HepG2 (cell line): ENCODE measurements at regions of chr20 and their contacts with region 1.

Region 1: GRCh38 chr20:5100684-5101347 is 18.9 kb downstream of the PCNA start:
- DNase-seq: peak; percentile 63
- ATAC-seq: peak; percentile 81
- H3K4me3 ChIP-seq: no peak overlapping the region
- H3K27ac ChIP-seq: no peak overlapping the region
- H3K4me1 ChIP-seq: no peaks in the 10 kb centered on the region
- H3K27me3 ChIP-seq: no peaks in the 10 kb centered on the region
- CTCF ChIP-seq: peak; percentile 95
- EP300 ChIP-seq: no peak
- POLR2A ChIP-seq: no peak
- RAD21 ChIP-seq: peak; percentile 94

Region 2: DNA sequence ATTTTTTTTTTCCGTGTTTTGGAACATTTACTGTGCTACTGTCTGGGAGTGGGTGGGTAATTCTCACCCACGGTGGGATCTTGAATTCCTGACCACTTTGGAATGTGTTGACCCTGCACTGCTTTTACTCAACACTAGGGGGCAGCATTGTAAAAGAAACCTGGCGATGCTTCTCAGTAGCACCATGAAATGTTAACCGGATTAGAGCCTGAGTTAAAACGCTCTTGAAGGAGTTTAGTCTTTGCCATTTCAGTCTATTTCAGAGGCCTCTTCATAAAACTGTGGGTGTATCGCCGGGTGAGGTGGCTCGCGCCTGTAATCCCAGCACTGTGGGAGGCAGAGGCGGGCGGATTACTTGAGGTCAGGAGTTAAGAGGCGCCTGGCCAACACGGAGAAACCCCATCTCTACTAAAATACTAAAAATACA is 493.5 kb before region 1 on chr20:
- CTCF ChIA-PET with region 1: no interaction called
- POLR2A ChIA-PET with region 1: no interaction called
- in situ Hi-C with region 1: loop called (anchors 10 kb)
- intact Hi-C with region 1: loop called (anchors 1 kb)
- DNase-seq: peak; percentile 78
- ATAC-seq: peak; percentile 89
- H3K4me3 ChIP-seq: no peak overlapping the region
- H3K27ac ChIP-seq: no peak overlapping the region
- H3K4me1 ChIP-seq: no peaks in the 10 kb centered on the region
- H3K27me3 ChIP-seq: peaks cover 4 to 38% of the 10 kb centered on the region in 2 experiments
- CTCF ChIP-seq: peak; percentile 95
- EP300 ChIP-seq: no peak
- POLR2A ChIP-seq: no peak
- RAD21 ChIP-seq: peak; percentile 96

Region 3: GRCh38 chr20:4666001-4666479 is 434.8 kb before region 1 on chr20:
- CTCF ChIA-PET with region 1: no interaction called
- POLR2A ChIA-PET with region 1: no interaction called
- in situ Hi-C with region 1: no loop called
- intact Hi-C with region 1: no loop called
- DNase-seq: no peak
- ATAC-seq: no peak
- H3K4me3 ChIP-seq: no peak overlapping the region
- H3K27ac ChIP-seq: no peak overlapping the region
- H3K4me1 ChIP-seq: peaks cover 12% of the 10 kb centered on the region
- H3K27me3 ChIP-seq: no peaks in the 10 kb centered on the region; a peak in 1 of 5 replicates
- CTCF ChIP-seq: no peak
- EP300 ChIP-seq: no peak
- POLR2A ChIP-seq: no peak
- RAD21 ChIP-seq: no peak

Region 4: GRCh38 chr20:4973330-4974097 is 127.3 kb before region 1 on chr20:
- CTCF ChIA-PET with region 1: no interaction called
- POLR2A ChIA-PET with region 1: no interaction called
- in situ Hi-C with region 1: no loop called
- intact Hi-C with region 1: loop called (anchors 2 kb)
- DNase-seq: peak; percentile 99
- ATAC-seq: peak; percentile 98
- H3K4me3 ChIP-seq: peak overlapping the region; percentile 17 to 43 (median 38); a peak in 5 of 6 replicates
- H3K27ac ChIP-seq: peak overlapping the region; percentile 69
- H3K4me1 ChIP-seq: peaks cover 96% of the 10 kb centered on the region
- H3K27me3 ChIP-seq: no peaks in the 10 kb centered on the region
- CTCF ChIP-seq: peak; percentile 38
- EP300 ChIP-seq: peak; percentile 97 to 99
- POLR2A ChIP-seq: 0 out of 4 replicates have a peak, but pooled peaks of 1 of the 2 experiments have one; percentile 30
- RAD21 ChIP-seq: peak; percentile 44; the same call in 1 of the 2 replicates

Region 5: DNA sequence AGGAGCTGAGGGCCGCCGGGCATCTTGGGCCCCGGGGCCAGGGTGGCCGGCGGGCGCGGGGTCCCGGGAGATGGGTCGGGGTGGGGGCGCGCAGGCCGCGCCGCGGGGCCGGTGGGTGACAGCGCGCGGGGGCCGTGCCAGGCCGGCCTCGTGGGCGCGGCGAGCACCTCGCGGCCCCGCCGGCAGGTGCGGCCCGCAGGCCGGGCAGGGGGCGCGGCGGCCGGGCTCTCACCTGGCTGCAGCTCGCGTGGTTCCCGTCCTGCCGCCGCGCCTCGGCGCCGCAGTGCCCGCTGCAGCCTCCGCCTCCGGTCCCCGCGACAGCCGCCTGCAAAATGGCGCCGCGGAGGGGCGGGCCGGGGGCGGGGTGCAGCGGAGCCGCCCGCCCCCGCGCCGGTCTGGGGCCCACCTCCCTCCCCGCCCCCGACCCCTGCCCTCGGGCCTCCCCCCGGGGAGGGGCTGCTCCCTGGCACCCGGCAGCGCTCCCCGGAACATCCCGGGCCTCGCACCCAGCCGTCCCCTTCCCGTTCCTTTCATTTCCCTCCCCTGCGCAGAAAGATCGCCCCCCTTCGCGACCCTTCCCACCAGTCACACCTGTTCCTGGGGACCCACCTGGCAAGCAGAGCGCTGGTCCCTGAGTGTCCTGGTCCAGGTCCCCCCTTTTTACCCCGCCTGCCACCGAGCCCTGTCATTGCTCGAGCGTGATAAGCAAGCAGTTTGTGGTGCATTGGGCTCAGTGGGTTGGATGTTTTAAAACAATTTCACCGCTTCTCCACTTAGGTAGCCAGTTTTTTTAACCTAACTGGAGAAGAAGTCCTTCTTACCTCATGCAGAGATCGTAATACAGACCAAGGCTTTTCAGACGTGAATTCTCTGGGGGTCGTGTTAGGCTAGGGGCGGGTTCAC is 99.4 kb before region 1 on chr20 and contains the start of gene SLC23A2:
- CTCF ChIA-PET with region 1: interaction called, 3 read pairs
- POLR2A ChIA-PET with region 1: no interaction called
- in situ Hi-C with region 1: loop called (anchors 10 kb)
- intact Hi-C with region 1: loop called (anchors 1 kb)
- DNase-seq: no peak
- ATAC-seq: peak; percentile 67
- H3K4me3 ChIP-seq: peak within 1 kb of the TSS; percentile 82 to 94 (median 92)
- H3K27ac ChIP-seq: peak within 1 kb of the TSS; percentile 45
- H3K4me1 ChIP-seq: peaks cover 59% of the 10 kb centered on the region
- H3K27me3 ChIP-seq: no peaks in the 10 kb centered on the region; a peak in 1 of 5 replicates
- CTCF ChIP-seq: 0 out of 2 replicates have a peak, but pooled peaks have one; percentile 17
- EP300 ChIP-seq: no peak
- POLR2A ChIP-seq: peak; percentile 18 to 79; a peak in 2 of 4 replicates
- RAD21 ChIP-seq: no peak; the same call in 1 of the 2 replicates
- total RNA-seq, gene SLC23A2: 26.2 and 42.2 TPM in 2 replicates

Region 6: DNA sequence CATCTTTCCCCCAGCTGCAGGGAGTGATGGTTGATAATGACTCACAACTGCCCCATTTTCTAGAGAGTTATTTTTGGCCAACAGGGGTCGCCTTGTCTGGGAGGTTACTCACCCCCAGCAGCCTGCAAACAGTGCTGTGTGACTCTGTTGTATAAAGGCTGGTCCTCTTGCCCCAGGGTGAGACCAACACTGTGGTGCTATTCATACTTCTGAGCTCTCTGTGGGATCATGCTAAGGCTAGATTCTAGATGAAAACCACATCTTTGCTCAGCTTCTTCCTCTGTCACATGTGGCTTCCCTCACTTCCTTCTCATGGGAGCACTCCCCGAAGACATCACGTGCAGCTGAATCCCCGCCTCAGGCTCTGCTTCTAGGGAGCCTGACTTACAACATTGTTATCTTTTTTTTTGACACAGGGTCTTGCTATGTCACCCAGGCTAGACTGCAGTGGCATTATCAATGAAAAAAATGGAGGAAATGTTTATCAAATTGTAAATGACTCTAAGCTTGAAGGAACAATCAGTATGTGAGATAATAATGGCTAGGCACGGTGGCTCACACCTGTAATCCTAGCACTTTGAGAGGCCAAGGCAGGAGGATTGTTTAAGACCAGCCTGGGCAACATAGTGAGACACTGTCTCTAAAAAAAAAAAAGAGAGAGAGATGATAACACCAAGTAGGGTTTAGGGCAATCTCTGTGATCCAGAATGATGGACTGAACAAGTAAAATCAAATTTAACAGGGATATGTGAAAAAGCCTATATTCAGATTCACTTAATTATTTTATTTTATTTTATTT is 43.8 kb before region 1 on chr20:
- CTCF ChIA-PET with region 1: interaction called, 17 read pairs
- POLR2A ChIA-PET with region 1: no interaction called
- in situ Hi-C with region 1: no loop called
- intact Hi-C with region 1: loop called (anchors 1 kb)
- DNase-seq: peak; percentile 69
- ATAC-seq: peak; percentile 96
- H3K4me3 ChIP-seq: no peak overlapping the region
- H3K27ac ChIP-seq: no peak overlapping the region
- H3K4me1 ChIP-seq: no peaks in the 10 kb centered on the region
- H3K27me3 ChIP-seq: no peaks in the 10 kb centered on the region
- CTCF ChIP-seq: peak; percentile 83
- EP300 ChIP-seq: no peak
- POLR2A ChIP-seq: no peak
- RAD21 ChIP-seq: peak; percentile 75

Region 7: GRCh38 chr20:5222919-5223634 is 122.3 kb after region 1 on chr20:
- CTCF ChIA-PET with region 1: no interaction called
- POLR2A ChIA-PET with region 1: no interaction called
- in situ Hi-C with region 1: no loop called
- intact Hi-C with region 1: no loop called
- DNase-seq: peak; percentile 67
- ATAC-seq: peak; percentile 75
- H3K4me3 ChIP-seq: no peak overlapping the region
- H3K27ac ChIP-seq: no peak overlapping the region
- H3K4me1 ChIP-seq: peaks cover 17% of the 10 kb centered on the region
- H3K27me3 ChIP-seq: no peaks in the 10 kb centered on the region
- CTCF ChIP-seq: peak; percentile 98
- EP300 ChIP-seq: no peak
- POLR2A ChIP-seq: no peak
- RAD21 ChIP-seq: peak; percentile 95

Region 8: DNA sequence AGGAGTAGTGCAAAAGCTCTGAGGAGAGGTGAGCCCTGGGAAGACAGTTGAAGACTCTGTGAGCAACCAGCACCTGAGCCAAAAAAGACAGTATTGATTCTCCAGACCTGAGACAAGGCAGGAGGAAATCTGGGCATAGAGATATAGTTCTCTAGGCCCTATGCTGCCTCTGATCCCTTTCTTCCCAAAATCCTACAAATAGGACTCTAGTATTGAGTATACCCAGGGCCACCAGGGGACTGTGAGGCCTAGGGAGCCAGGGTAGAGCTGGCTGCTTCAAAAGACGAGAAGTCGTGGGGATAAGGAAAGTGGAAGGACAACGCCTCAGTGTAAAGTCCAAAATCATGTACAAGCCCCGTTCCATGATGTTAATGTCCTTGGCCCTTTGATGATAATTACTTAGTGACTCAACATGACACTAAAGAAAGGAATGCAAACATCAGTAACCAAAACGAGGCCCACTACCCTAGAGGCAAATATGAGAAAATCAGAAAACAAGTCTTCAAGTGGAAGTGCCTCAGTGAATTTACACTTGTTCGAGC is 413.2 kb after region 1 on chr20:
- CTCF ChIA-PET with region 1: no interaction called
- POLR2A ChIA-PET with region 1: no interaction called
- in situ Hi-C with region 1: no loop called
- intact Hi-C with region 1: no loop called
- DNase-seq: peak; percentile 99
- ATAC-seq: peak; percentile 93
- H3K4me3 ChIP-seq: peak overlapping the region in 1 of 3 experiments; percentile 35; a peak in 1 of 6 replicates
- H3K27ac ChIP-seq: peak overlapping the region; percentile 25
- H3K4me1 ChIP-seq: peaks cover 19% of the 10 kb centered on the region
- H3K27me3 ChIP-seq: peaks cover 0 to 11% of the 10 kb centered on the region in 2 experiments; a peak in 1 of 5 replicates
- CTCF ChIP-seq: peak; percentile 41
- EP300 ChIP-seq: peak; percentile 84 to 99
- POLR2A ChIP-seq: no peak
- RAD21 ChIP-seq: no peak